Posterior vena cava (tissue), 2 donors: ENCODE measurements at regions of chr10 and their contacts with region 1.

Region 1: GRCh38 chr10:11293332-11293731 is 275.7 kb downstream of the CELF2 start:
- DNase-seq: peak; percentile 42

Region 2: DNA sequence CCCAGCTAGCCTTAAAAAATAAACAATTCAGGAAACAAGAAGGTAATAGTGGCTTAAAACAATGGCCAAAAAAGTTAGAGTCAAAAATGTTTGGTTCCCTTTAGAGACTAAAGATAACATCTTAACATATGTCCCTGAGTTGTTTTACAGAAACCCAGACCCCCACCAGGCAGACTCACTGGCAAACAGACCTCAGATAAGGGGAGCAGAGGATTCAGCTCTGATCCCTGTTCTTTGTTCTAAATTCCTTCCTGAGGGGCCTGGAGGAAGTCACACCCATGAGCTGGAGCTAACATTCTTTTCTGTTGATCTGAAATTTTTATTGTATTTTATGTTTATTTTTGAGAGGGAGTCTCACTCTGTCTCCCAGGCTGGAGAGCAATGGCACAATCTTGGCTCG is 70.9 kb after region 1 on chr10:
- intact Hi-C with region 1: loop called in 1 of 2 experiments (anchors 2 kb)
- DNase-seq: no peak

Region 3: DNA sequence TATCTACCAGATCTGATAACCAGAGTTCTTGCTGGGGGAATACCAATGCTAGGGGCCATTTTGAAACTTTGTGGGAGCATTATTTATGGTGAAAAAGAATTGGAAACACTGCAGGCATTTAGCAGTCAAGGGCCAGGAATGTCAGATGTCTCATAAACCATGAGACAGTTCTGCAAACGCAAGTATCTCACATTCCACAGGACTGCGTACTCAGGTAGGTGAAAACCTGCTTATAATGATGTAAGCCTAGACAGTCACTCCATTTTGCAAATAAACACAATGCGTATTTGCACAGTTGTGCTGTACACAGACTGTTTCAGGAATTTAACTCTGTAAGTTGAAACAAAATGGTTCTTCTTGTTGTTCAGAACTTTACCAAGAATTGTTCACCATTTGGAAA is 482.8 kb after region 1 on chr10:
- intact Hi-C with region 1: no loop called
- DNase-seq: no peak